Activated CD4-positive, alpha-beta T cell treated with anti-CD3 and anti-CD28 coated beads for 36 hours (primary cell): ENCODE measurements at regions of chr2 and their contacts with region 1.

Region 1: DNA sequence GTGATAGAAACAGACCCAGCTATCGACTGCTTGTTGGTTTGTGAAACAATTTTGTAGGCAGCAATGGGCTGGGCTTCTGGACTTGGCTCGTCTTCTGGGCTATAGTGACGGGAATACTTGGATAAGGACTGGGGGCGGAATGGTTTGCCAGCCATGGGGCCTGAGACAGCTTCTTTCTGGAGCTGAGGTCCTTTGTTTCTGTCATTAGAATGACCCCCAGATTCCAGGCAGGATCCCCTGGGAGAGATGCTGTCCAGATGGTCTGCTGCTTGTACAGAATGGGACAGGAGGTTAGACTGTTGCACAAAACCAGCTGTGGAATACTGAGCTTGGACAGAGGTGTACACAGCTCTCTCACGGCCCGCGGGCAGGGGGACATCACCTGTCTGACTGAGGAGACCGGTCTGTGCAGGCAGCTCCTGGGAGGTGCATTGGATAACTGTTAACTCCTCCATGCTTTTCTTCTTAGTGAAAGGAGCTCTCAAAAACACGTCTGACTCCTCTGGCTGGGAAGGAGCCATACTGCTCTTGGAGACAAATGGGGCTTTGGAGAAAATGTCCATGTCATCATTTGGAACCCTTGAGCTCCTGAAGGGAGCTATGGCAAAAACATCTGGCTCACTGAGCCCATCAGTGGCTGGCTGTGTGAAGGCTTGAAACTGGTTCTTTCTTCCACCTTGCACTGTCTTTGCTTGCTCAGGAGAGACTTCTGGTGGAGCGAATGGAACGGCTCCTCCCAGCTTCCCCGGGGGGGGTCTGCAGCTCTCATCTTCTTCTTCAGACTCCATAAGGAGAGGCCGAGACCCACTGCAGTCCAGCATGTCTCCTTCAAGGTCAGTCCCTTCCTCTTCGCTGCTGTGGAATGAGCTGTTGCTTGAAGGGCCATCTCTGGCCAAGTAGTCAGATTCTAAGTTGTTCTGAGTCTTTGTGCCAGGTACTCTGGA is 28.6 kb upstream of the NFU1 start:
- DNase-seq: no peak
- ATAC-seq: no peak
- H3K4me3 Mint-ChIP-seq: no peak overlapping the region
- H3K27ac Mint-ChIP-seq: no peak overlapping the region
- H3K4me1 Mint-ChIP-seq: peaks cover 5% of the 10 kb centered on the region
- H3K27me3 Mint-ChIP-seq: no peaks in the 10 kb centered on the region

Region 2: GRCh38 chr2:69453475-69454129 is 12.2 kb before region 1 on chr2:
- CTCF ChIA-PET with region 1: no interaction called
- POLR2A ChIA-PET with region 1: interaction called, 4 read pairs
- intact Hi-C with region 1: loop called in 1 of 2 experiments (anchors 1 kb)
- DNase-seq: peak; percentile 63
- ATAC-seq: peak; percentile 96
- H3K4me3 Mint-ChIP-seq: no peak overlapping the region
- H3K27ac Mint-ChIP-seq: peak overlapping the region; percentile 74
- H3K4me1 Mint-ChIP-seq: peaks cover 30% of the 10 kb centered on the region
- H3K27me3 Mint-ChIP-seq: no peaks in the 10 kb centered on the region